CD8-positive, alpha-beta T cell (primary cell): ENCODE measurements at regions of chr15 and their contacts with region 1.

Region 1: DNA sequence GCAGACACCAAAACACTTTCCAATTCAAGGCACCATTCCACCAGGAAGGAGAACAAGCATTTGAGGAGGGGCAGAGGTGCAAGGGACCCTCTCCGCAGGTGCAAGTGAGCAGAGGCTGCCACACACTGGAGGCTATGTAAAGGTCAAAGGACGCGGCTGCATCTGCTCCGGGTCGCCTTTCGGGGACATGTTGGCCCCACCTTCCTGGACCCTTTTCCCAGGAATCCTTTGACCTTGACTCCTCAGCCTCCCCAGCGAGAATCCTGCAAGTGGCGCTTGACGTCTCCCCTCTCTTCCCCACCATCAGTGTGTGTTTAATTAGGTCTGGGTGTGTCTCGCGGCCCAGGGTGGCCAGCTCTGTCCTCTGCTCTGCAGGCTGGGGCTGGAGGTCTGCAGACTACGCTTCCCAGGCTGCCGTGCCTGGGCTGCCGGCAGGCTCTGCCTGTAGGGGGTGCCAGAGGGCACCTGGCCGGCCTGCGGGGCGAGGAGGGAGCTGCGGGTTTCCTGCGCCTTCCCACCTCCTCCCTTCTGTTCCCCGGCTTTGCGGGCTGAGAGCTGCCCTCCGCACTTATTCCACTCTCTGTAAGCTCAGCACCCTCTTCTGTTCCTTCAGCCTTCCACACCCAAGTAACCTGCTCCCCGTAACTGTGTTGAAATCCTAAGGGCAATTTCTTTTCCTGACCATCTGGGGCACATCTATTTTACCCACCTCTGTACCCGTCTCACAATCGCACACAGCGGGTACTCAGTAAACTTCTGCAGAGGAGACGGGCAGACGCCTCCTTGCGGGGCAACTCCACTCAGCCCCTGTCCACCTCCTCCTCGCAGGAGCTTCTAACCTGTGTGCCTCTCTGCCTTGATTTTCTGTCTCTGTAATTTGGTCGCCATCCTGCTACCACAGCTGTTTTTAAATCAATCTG is 129.8 kb downstream of the NSMCE3 start:
- DNase-seq: peak; percentile 26 to 75 (median 48)
- ATAC-seq: peak; percentile 71
- H3K4me3 ChIP-seq: no peak overlapping the region
- H3K4me3 Mint-ChIP-seq: no peak overlapping the region
- H3K27ac ChIP-seq: no peak overlapping the region
- H3K27ac Mint-ChIP-seq: no peak overlapping the region
- H3K4me1 ChIP-seq: peaks cover 7% of the 10 kb centered on the region
- H3K4me1 Mint-ChIP-seq: peaks cover 10% of the 10 kb centered on the region
- H3K27me3 ChIP-seq: peaks cover 0 to 4% of the 10 kb centered on the region in 2 experiments
- H3K27me3 Mint-ChIP-seq: peaks cover 58% of the 10 kb centered on the region
- CTCF ChIP-seq: peak; percentile 75

Region 2: DNA sequence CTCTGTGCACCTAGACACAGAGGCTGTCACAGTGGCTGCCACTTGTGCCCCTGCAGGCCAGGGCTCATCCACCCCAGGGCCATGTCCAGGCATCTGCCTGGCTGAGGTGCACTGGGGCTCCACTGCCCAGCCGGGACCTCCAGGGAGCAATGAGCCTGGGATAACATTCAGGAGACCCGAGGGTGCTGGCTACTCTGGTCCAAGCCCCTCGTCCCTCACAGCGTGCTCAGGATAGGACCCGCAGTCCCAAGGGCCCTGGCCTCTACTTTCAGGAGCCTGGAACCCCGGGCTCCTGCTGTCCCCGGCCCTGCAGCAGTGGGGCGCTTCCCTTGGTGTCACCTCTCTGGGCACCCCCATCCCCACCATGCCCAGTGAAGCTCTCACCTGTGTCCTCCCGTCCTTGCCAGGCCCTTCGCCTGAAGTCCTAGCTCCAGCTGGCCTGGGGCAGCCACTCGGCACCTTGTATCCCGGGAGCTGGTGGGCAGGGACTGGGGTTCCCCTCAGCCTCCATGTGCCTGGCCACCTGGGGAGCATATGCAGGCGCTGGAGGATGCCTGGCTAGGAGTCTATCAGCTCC is 28.0 kb before region 1 on chr15:
- CTCF ChIA-PET with region 1: interaction called, 5 read pairs
- POLR2A ChIA-PET with region 1: no interaction called
- intact Hi-C with region 1: loop called in 1 of 2 experiments (anchors 1 kb)
- DNase-seq: peak in 1 of 9 experiments; percentile 18
- ATAC-seq: no peak
- H3K4me3 ChIP-seq: no peak overlapping the region
- H3K4me3 Mint-ChIP-seq: no peak overlapping the region
- H3K27ac ChIP-seq: no peak overlapping the region
- H3K27ac Mint-ChIP-seq: no peak overlapping the region
- H3K4me1 ChIP-seq: peaks cover 10% of the 10 kb centered on the region
- H3K4me1 Mint-ChIP-seq: peaks cover 15% of the 10 kb centered on the region
- H3K27me3 ChIP-seq: no peaks in the 10 kb centered on the region
- H3K27me3 Mint-ChIP-seq: no peaks in the 10 kb centered on the region
- CTCF ChIP-seq: no peak